B cell (primary cell): ENCODE measurements at regions of chr1 and their contacts with region 1.

Region 1: DNA sequence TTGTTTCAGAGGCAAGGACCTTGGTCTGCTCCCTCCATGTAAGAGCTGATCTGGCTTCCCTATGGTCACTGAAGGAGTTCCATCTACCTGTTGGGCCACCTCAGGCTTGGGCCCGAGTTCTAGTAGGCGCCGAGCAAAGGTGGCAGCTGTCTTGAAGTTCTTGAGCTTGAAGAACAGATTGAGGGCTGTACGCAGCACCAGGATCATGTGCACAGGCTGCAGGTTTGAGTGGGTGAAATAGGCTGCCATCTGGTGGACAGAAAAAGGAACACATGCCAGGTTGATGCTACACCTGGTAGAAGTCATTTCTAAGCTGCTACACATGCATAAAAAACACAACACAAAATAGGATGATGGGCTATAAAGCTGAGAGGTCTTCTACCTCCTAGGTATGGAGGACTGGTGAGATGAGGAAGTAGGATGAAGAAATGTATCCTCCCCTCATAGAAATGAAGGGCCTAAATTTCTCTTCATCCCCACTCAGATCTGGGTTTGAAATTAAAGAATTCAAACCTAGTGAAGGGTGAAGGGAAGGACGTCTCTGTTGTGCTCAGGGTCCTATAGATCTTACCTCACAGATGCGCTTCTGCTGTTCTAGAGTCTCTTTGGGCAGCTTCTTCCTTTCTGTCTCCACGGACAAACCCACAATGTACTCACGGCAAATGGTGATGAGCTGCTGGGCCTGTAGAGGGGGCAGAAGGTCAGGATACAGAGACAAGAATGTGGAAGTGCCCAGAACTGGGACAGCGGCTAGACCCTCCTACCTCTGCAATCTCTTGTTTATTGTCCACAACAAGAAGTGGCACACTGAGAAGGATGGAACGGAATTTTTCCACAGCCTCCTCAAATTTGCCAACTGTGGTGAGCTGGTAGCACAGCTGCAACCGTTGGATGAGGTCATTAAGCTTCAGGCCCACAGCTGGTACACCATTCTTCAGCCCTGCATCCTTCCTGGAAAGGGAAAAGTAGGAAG is 6.6 kb upstream of the PEX19 start:
- DNase-seq: peak; percentile 84
- ATAC-seq: peak; percentile 97
- H3K4me3 ChIP-seq: no peak overlapping the region
- H3K4me3 Mint-ChIP-seq: no peak overlapping the region
- H3K27ac ChIP-seq: peak overlapping the region in 1 of 2 donors; percentile 24
- H3K27ac Mint-ChIP-seq: peak overlapping the region; percentile 8
- H3K4me1 ChIP-seq: no peaks in the 10 kb centered on the region
- H3K4me1 Mint-ChIP-seq: peaks cover 3% of the 10 kb centered on the region
- H3K27me3 ChIP-seq: no peaks in the 10 kb centered on the region
- H3K27me3 Mint-ChIP-seq: no peaks in the 10 kb centered on the region
- CTCF ChIP-seq: peak; percentile 87

Region 2: GRCh38 chr1:160193091-160193819 is 98.3 kb before region 1 on chr1:
- CTCF ChIA-PET with region 1: interaction called, 160 read pairs
- POLR2A ChIA-PET with region 1: interaction called, 3 read pairs
- intact Hi-C with region 1: loop called (anchors 1 kb)
- DNase-seq: peak; percentile 84
- ATAC-seq: peak; percentile 94
- H3K4me3 ChIP-seq: no peak overlapping the region
- H3K4me3 Mint-ChIP-seq: no peak overlapping the region
- H3K27ac ChIP-seq: no peak overlapping the region
- H3K27ac Mint-ChIP-seq: no peak overlapping the region
- H3K4me1 ChIP-seq: peaks cover 9 to 22% of the 10 kb centered on the region in 2 donors
- H3K4me1 Mint-ChIP-seq: peaks cover 3% of the 10 kb centered on the region
- H3K27me3 ChIP-seq: no peaks in the 10 kb centered on the region
- H3K27me3 Mint-ChIP-seq: peaks cover 3% of the 10 kb centered on the region
- CTCF ChIP-seq: peak; percentile 90

Region 3: DNA sequence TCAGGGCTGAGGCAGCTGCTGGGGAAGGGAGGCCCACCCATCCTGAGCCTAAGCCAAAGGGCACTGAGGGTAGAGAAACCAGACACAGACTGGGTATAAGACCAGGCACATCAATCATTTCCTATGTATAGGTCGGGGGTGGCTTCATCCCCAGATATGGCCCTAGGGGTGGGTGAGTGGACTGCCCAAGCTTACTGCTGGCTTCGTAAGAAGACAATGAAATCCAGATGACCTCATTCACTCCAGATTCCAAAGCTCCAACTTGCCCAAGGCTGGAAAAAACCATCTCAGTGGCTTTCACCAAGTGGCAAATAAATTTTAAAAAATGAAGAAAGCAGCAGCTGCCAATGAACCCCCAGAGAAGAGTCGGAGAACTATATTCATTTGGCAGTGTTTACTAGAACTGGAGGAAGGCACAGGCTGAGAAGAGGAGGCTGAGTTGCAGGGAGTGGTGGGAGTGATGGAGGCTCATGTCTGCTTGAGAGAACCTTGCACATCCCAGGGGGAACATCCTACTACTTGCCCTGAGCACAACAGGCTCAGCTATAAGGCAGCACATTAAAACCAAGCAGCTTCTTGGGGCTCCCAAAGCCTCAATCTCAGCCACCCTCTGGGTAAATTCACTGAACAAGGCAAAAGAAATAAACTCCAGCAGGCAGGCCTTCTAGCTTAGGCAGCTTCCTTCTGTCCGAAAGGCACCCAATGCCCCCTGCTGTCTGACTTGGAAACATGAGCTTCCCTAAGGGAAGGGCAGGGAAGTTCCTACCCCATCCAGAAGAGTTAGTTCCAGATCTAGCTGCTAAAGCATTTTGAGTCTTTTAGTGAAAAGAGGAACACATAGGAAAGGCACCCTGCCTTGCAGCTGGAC is 72.2 kb before region 1 on chr1:
- CTCF ChIA-PET with region 1: interaction called, 11 read pairs
- POLR2A ChIA-PET with region 1: no interaction called
- intact Hi-C with region 1: no loop called
- DNase-seq: peak; percentile 34
- ATAC-seq: no peak
- H3K4me3 ChIP-seq: no peak overlapping the region
- H3K4me3 Mint-ChIP-seq: no peak overlapping the region
- H3K27ac ChIP-seq: peak overlapping the region in 1 of 2 donors; percentile 13
- H3K27ac Mint-ChIP-seq: peak overlapping the region; percentile 57
- H3K4me1 ChIP-seq: no peaks in the 10 kb centered on the region
- H3K4me1 Mint-ChIP-seq: no peaks in the 10 kb centered on the region
- H3K27me3 ChIP-seq: no peaks in the 10 kb centered on the region
- H3K27me3 Mint-ChIP-seq: no peaks in the 10 kb centered on the region
- CTCF ChIP-seq: no peak

Region 4: DNA sequence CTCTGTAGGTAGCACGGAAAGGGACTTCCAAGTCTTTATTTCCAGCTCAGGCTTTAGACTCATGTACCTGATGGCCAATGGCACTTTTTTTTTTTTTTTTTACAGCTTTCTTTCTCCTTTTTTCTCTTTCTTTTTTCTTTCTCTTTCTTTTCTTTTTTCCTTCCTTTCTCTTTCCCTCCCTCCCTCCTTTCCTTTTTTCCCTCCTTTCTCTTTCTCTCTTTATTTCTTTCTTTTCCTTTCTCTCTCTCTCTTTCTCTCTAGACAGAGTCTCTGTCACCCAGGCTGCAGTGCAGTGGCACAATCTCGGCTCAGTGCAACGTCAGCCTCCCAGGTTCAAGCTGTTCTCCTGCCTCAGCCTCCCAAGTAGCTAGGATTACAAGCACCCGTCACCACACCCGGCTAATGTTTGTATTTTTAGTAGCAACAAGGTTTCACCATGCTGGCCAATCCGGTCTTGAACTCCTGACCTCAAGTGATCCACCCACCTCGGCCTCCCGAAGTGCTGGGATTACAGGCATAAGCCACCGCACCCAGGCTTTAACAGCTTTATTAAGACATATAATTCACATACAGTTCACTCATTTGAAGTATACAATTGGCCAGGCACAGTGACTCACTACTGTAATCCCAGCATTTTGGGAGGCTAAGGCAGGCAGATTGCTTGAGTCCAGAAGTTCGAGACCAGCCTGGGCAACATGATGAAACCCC is 24.1 kb before region 1 on chr1:
- CTCF ChIA-PET with region 1: interaction called, 33 read pairs
- POLR2A ChIA-PET with region 1: interaction called, 3 read pairs
- intact Hi-C with region 1: no loop called
- DNase-seq: no peak
- ATAC-seq: no peak
- H3K4me3 ChIP-seq: no peak overlapping the region
- H3K4me3 Mint-ChIP-seq: no peak overlapping the region
- H3K27ac ChIP-seq: no peak overlapping the region
- H3K27ac Mint-ChIP-seq: no peak overlapping the region
- H3K4me1 ChIP-seq: peaks cover 5 to 8% of the 10 kb centered on the region in 2 donors
- H3K4me1 Mint-ChIP-seq: peaks cover 8% of the 10 kb centered on the region
- H3K27me3 ChIP-seq: no peaks in the 10 kb centered on the region
- H3K27me3 Mint-ChIP-seq: peaks cover 3% of the 10 kb centered on the region
- CTCF ChIP-seq: no peak

Region 5: DNA sequence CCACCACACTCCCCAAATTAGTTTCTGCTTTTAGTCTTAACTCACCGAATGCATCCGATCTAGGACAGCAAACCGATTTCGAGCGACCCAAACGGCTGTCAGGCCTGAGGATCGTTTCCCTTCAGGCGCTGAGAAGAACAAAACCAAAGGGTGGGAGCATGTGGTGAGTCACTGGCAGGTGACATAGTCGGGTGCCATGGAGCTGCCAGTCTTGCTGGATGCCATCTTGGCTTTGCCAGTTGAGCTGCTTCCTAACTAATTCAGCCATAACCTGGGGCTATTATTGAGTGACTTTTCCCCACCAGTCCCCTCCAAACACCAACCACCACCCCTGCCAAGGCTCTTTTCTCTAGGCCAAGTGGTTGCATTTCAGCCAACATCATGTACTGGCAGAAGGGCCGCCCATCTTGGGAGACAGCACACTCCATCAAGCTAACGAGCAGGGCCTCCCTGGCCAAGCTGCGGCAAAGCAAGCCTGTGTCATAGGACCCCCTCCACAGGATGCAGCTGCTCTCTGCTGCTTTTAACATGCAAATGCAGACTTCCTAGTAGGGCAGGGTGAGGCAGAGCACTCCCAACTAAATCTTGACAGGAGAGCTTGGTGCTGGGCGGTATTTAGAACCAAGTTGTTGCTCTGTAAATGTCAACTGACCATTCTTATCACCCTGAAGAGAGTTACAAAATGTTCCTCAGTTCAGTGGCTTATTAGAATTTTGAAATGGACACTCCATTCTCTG is 15.8 kb after region 1 on chr1:
- CTCF ChIA-PET with region 1: interaction called, 42 read pairs
- POLR2A ChIA-PET with region 1: no interaction called
- intact Hi-C with region 1: no loop called
- DNase-seq: peak; percentile 68
- ATAC-seq: peak; percentile 94
- H3K4me3 ChIP-seq: peak overlapping the region in 1 of 5 experiments; percentile 24
- H3K4me3 Mint-ChIP-seq: peak overlapping the region; percentile 41
- H3K27ac ChIP-seq: peak overlapping the region; percentile 39 to 72
- H3K27ac Mint-ChIP-seq: peak overlapping the region; percentile 91
- H3K4me1 ChIP-seq: peaks cover 7 to 22% of the 10 kb centered on the region in 2 donors
- H3K4me1 Mint-ChIP-seq: peaks cover 35% of the 10 kb centered on the region
- H3K27me3 ChIP-seq: no peaks in the 10 kb centered on the region
- H3K27me3 Mint-ChIP-seq: no peaks in the 10 kb centered on the region
- CTCF ChIP-seq: no peak

Region 6: DNA sequence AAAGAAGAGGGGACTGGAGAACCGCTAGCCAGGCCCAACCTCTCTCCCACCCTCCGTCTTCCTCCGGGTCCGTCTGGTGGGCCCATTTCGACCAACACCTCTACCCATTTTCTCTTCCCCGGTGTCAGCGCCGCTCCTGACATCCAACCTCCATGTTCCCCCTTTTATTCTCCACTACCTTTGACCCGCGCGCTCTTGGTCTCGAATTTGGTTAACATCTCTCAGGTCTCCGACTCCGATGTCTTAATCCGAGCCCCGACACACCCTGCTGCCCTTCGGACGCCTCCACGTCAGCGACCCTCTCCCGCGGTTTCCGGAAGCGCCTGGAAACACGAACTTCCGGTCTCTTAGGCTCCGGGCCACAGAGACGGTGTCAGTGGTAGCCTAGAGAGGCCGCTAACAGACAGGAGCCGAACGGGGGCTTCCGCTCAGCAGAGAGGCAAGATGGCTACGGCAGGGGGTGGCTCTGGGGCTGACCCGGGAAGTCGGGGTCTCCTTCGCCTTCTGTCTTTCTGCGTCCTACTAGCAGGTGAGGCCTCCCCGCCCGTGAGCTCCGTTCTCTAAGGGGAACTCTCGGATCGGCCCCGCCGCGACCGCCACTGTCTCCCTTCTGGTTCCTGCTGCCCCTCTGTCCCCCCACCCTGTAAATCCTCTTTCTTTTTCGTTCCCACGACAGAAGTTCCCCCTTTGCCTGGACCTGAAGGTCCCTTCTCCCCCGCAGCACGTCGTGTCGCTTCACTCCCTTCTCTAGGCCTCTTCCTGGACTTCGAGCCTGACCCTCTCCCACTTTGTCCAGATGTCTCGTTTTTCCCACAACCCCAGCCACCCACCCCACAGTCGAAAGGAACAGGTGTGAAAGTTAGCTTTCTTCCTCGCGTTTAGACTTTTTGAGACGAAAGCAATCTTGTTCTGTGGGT is 51.7 kb after region 1 on chr1 and contains the starts of genes COPA and NCSTN:
- CTCF ChIA-PET with region 1: interaction called, 19 read pairs
- POLR2A ChIA-PET with region 1: no interaction called
- intact Hi-C with region 1: no loop called
- DNase-seq: peak; percentile 97
- ATAC-seq: peak; percentile 91
- H3K4me3 ChIP-seq: peak within 1 kb of the TSS; percentile 90 to 100 (median 98)
- H3K4me3 Mint-ChIP-seq: peak within 1 kb of the TSS; percentile 99
- H3K27ac ChIP-seq: peak within 1 kb of the TSS; percentile 89 to 95
- H3K27ac Mint-ChIP-seq: peak within 1 kb of the TSS; percentile 99
- H3K4me1 ChIP-seq: peaks cover 46 to 54% of the 10 kb centered on the region in 2 donors
- H3K4me1 Mint-ChIP-seq: peaks cover 71% of the 10 kb centered on the region
- H3K27me3 ChIP-seq: no peaks in the 10 kb centered on the region
- H3K27me3 Mint-ChIP-seq: no peaks in the 10 kb centered on the region
- CTCF ChIP-seq: no peak
- total RNA-seq, gene COPA: 168 and 180 TPM in 2 replicates
- total RNA-seq, gene NCSTN: 95.1 and 110 TPM in 2 replicates

Region 7: GRCh38 chr1:160394673-160395072 is 103.1 kb after region 1 on chr1:
- CTCF ChIA-PET with region 1: no interaction called
- POLR2A ChIA-PET with region 1: no interaction called
- intact Hi-C with region 1: no loop called
- DNase-seq: no peak
- ATAC-seq: no peak
- H3K4me3 ChIP-seq: no peak overlapping the region
- H3K4me3 Mint-ChIP-seq: no peak overlapping the region
- H3K27ac ChIP-seq: no peak overlapping the region
- H3K27ac Mint-ChIP-seq: no peak overlapping the region
- H3K4me1 ChIP-seq: peaks cover 0 to under 1% of the 10 kb centered on the region in 2 donors
- H3K4me1 Mint-ChIP-seq: peaks cover 6% of the 10 kb centered on the region
- H3K27me3 ChIP-seq: peaks cover 0 to under 1% (median 0%) of the 10 kb centered on the region in 4 experiments
- H3K27me3 Mint-ChIP-seq: peaks cover 8% of the 10 kb centered on the region
- CTCF ChIP-seq: no peak